Activated CD8-positive, alpha-beta memory T cell treated with anti-CD3 and anti-CD28 coated beads, Interleukin-2, amount 10 ng/mL, durations not matched to agents 7 days and 5 days (primary cell): ENCODE measurements at regions of chr4 and their contacts with region 1.

Region 1: GRCh38 chr4:124334119-124334518 is 378.4 kb downstream of the ANKRD50 start:
- DNase-seq: no peak
- ATAC-seq: no peak
- H3K4me3 Mint-ChIP-seq: no peak overlapping the region
- H3K27ac Mint-ChIP-seq: no peak overlapping the region
- H3K4me1 Mint-ChIP-seq: no peaks in the 10 kb centered on the region
- H3K27me3 Mint-ChIP-seq: no peaks in the 10 kb centered on the region

Region 2: DNA sequence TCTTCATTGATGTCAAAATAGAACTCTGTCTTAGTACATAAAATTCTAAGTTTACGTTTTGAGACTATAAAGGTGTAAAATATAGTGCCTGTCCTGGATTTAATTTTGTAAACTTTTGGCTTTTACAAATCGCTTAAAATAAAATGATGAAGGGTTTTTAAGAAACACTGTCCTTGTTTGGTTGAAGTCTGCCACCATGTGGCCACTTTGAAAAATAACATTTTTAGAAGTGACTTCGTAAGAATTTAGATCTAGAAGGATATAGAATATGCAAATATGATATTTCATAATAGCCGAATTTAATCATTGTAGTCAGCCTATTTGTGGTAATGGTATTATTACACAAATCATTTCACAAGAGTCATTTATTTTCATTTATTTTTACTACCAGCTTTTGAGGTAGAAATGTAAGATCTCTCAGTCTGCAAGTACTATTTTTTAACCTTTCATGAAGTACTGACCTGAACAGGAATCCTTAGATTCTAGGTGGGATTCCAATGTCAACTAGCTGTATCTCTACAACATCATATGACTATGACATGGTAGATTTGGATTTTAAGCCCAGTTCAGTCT is 949.7 kb after region 1 on chr4:
- CTCF ChIA-PET with region 1: interaction called, 12 read pairs
- DNase-seq: no peak
- ATAC-seq: no peak
- H3K4me3 Mint-ChIP-seq: no peak overlapping the region
- H3K27ac Mint-ChIP-seq: no peak overlapping the region
- H3K4me1 Mint-ChIP-seq: no peaks in the 10 kb centered on the region
- H3K27me3 Mint-ChIP-seq: no peaks in the 10 kb centered on the region